ENCODE measurements at regions of chr2 and their contacts with region 1.

Region 1: DNA sequence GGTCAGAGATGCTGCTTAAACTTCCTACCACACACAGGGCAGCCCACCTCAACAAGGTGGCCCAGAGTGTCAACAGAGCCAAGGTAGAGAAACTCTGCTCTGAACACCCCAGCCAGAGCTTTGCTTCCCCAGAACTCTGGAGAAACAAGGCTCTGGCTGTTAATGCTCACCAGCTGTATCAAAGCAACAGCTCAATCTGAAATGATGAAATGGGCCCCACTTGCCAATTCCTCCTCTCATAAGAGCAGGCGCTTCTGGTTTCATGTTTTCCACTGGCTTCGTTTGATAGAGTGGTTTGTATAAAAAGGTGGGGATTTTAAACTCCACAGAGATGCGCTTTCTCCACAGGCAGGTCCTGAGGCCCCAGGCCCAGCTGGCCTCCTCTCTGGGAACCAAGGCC is 60.9 kb upstream of the TFCP2L1 start:
- DNase-seq: no peak
- H3K4me3 ChIP-seq: no peak overlapping the region
- H3K27ac ChIP-seq: no peak overlapping the region
- H3K4me1 ChIP-seq: no peaks in the 10 kb centered on the region
- H3K27me3 ChIP-seq: no peaks in the 10 kb centered on the region
- CTCF ChIP-seq: no peak
- EP300 ChIP-seq: no peak
- POLR2A ChIP-seq: no peak
- RAD21 ChIP-seq: no peak

Region 2: GRCh38 chr2:121356058-121356640 is 10.3 kb after region 1 on chr2:
- CTCF ChIA-PET with region 1: interaction called, 109 read pairs
- POLR2A ChIA-PET with region 1: no interaction called
- DNase-seq: peak; percentile 46 to 71
- H3K4me3 ChIP-seq: no peak overlapping the region
- H3K27ac ChIP-seq: no peak overlapping the region
- H3K4me1 ChIP-seq: no peaks in the 10 kb centered on the region
- H3K27me3 ChIP-seq: no peaks in the 10 kb centered on the region
- CTCF ChIP-seq: peak in 2 of 3 experiments; percentile 75 to 85; a peak in 3 of 4 replicates
- EP300 ChIP-seq: no peak
- POLR2A ChIP-seq: no peak
- RAD21 ChIP-seq: peak; percentile 77 to 80

Measured in H1 (cell line).